Motor neuron (in vitro differentiated cells): ENCODE measurements at regions of chr15 and their contacts with region 1.

Region 1: GRCh38 chr15:26891448-26892181 is 24.8 kb downstream of the GABRA5 start:
- ATAC-seq: peak; percentile 91 to 97 (median 96)
- H3K4me3 ChIP-seq: no peak overlapping the region
- H3K27ac ChIP-seq: no peak overlapping the region
- H3K4me1 ChIP-seq: no peaks in the 10 kb centered on the region

Region 2: DNA sequence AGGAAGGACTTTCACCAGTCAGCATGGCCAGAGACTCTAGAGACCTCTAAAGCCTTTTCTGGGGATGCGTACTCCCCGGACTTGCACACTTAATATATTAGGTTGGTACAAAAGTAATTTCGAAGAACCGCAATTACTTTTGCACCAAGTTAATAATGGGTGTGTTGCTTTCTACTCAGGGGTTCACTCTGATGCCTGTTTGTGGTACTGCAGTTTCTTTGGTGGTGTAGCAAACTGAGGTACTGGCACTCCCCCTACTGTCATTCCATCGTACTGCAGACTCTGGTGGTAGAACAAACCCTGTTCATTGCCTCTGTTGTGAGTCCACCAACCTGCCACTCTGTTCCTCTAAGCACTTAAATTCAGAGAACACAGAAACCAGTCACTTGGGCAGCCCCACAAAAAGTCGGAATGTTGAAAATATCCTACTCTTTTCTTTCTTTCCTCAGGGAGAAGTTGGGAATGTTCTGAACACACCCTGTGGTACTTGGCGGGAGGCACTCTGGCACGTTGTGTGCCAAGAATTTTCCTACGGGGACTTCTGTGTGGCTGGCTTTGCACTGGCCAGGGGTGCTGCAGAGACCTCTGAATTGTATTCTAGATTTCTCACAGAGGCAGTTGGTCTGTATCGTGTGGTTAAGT is 125.7 kb after region 1 on chr15:
- in situ Hi-C with region 1: loop called in 1 of 9 experiments (anchors 25 kb)
- ATAC-seq: peak in 6 of 8 experiments; percentile 41 to 97 (median 84)
- H3K4me3 ChIP-seq: no peak overlapping the region
- H3K27ac ChIP-seq: no peak overlapping the region
- H3K4me1 ChIP-seq: no peaks in the 10 kb centered on the region

Region 3: DNA sequence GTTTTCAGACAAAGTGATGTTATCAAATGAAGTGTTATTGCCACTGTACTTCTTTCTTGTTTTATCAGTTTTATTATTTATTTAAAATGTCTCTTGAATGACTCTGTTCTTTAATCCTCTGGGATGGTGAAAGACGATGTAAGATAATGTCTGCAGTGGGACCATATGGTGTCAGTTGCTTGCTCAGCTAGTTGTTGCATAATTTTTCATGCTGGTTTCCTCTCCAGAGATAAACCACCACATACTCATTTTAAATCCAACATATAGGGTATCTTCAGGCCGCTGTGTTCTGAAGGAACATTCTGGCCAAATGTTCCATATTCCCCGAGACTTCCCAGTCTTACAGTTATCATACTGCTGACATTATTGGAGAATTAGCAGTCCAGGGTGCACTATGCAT is 155.3 kb after region 1 on chr15:
- in situ Hi-C with region 1: no loop called
- ATAC-seq: no peak
- H3K4me3 ChIP-seq: no peak overlapping the region
- H3K27ac ChIP-seq: no peak overlapping the region
- H3K4me1 ChIP-seq: peaks cover 6 to 13% of the 10 kb centered on the region in 2 donors

Region 4: GRCh38 chr15:27183201-27183600 is 291.6 kb after region 1 on chr15:
- in situ Hi-C with region 1: no loop called
- ATAC-seq: peak in 5 of 8 experiments; percentile 90 to 94 (median 90)
- H3K4me3 ChIP-seq: no peak overlapping the region
- H3K27ac ChIP-seq: peak overlapping the region in 1 of 2 donors; percentile 17
- H3K4me1 ChIP-seq: peaks cover 14 to 20% of the 10 kb centered on the region in 2 donors

Region 5: GRCh38 chr15:28123408-28124023 is 1231.9 kb after region 1 on chr15:
- in situ Hi-C with region 1: loop called in 4 of 9 experiments (anchors 10 to 25 kb)
- ATAC-seq: peak; percentile 85 to 98 (median 91)
- H3K4me3 ChIP-seq: no peak overlapping the region
- H3K27ac ChIP-seq: no peak overlapping the region
- H3K4me1 ChIP-seq: no peaks in the 10 kb centered on the region